ENCODE measurements at regions of chr1 and their contacts with region 1.

Region 1: GRCh38 chr1:58783993-58784757 is at the start of gene JUN:
- DNase-seq: peak; percentile 99
- H3K4me3 Mint-ChIP-seq: peak within 1 kb of the TSS; percentile 91
- H3K27ac Mint-ChIP-seq: peak within 1 kb of the TSS; percentile 98
- H3K4me1 Mint-ChIP-seq: peaks cover 21% of the 10 kb centered on the region
- H3K27me3 Mint-ChIP-seq: no peaks in the 10 kb centered on the region
- CTCF ChIP-seq: no peak
- total RNA-seq, gene JUN: 60.6 and 71.5 TPM in 2 replicates

Region 2: DNA sequence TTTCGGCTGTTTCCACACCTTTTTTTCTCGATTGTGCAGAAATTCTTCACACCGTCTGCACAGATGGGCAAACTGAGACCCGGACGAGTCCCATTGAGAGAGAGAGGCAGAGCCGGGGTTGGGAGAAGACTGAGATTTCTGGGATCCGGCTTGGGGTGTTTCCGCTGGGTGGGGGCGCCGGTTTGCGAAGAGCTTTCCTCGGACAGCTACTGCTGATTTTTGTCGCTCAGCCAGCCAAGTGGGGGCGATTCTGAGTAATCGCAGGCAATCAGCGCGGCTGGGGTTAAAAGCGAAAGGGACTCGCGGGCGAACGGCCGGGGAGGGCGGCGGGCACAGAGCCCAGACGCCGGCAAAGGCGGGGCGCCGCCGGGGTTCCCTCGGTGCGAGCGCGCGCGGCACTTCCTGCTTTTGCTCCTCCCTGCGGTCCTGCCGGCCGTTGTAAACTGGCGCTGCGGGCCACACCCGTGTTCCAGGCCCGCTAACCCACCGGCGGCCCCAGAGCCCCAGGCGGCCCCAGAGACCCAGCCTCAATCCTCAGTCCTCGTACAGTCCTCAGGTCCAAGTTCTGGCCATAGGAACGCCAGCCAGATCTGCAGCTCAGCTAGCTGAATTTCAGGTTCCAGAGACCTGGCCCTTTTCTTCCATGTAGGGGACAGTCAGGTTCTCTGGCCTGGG is 32.0 kb after region 1 on chr1:
- CTCF ChIA-PET with region 1: interaction called, 7 read pairs
- POLR2A ChIA-PET with region 1: interaction called, 29 read pairs
- intact Hi-C with region 1: loop called (anchors 1 kb)
- DNase-seq: peak; percentile 88
- H3K4me3 Mint-ChIP-seq: peak overlapping the region; percentile 78
- H3K27ac Mint-ChIP-seq: peak overlapping the region; percentile 91
- H3K4me1 Mint-ChIP-seq: peaks cover 33% of the 10 kb centered on the region
- H3K27me3 Mint-ChIP-seq: no peaks in the 10 kb centered on the region
- CTCF ChIP-seq: no peak

Region 3: DNA sequence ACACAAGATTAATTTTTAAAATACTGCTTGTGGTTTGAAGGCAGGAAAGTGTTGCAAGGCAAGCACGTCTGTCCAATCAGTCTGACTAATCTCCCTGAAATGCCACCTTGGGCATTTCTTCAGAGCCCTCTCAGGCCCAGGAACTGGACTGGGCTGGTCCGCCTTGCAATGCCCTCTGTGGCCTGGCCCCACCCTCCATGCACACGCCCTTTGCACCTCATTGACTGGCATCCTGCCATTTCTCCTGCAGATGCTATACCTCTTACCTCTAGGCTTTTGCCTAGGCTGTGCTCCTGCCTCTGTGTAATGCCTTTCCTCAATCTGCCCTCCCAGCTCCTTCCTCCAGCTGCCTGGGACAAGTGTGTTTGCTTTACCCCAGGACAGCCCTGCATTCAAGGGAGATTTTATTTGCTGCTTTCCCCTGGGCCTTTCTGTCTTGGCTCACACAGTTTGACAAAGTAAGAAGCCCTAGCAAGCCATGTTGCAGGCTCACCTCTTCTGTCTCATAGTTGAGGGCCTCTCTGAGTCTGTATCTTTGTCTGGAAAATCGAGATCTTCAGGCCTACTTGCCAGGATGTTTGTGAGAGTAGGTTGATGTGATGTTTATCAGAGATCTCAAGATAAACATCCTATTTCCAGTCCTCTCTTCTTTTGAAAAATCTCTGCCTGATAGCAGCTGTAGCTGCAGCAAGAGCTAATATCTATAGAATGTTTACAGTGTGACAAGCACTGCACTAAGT is 148.9 kb after region 1 on chr1:
- CTCF ChIA-PET with region 1: interaction called, 5 read pairs
- POLR2A ChIA-PET with region 1: interaction called, 41 read pairs
- intact Hi-C with region 1: loop called (anchors 2 kb)
- DNase-seq: peak; percentile 99
- H3K4me3 Mint-ChIP-seq: peak overlapping the region; percentile 20
- H3K27ac Mint-ChIP-seq: peak overlapping the region; percentile 86
- H3K4me1 Mint-ChIP-seq: peaks cover 62% of the 10 kb centered on the region
- H3K27me3 Mint-ChIP-seq: no peaks in the 10 kb centered on the region
- CTCF ChIP-seq: no peak

Region 4: DNA sequence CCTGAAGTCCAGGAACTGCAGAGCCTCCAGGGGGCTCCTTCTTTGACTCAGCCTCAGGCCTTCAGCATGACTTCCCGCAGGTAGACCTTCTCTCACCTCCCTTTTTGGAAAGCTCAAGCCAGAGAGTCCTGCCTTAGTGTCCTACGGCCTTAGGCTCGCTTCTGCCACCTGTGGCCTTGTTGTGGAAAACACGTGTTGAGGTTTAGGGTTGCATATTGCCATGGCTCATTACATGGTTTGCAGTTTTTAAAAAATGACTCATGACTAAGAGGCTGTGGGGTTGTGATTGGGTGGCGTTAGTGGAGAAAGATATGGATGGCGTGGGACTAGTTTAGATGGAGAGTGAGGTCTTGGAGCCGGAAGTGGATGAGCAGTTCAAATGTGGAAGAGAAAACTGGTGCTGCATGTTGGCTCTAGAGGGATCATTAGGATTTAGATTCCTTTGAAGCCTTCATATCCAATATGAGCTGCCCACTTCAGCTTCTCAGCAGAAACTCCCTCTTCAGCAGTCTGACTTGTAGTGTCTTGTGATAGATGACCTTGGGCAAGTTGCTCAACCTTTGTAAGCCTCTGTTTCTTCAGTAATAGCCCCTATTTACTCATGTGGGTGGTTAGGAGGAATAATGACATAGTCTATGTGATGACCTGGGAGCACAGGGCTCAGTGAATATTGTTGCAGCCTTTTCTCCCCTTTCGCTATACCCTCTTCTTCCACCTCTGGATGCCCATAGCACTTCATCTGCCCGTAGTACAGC is 506.2 kb after region 1 on chr1:
- CTCF ChIA-PET with region 1: interaction called, 3 read pairs
- POLR2A ChIA-PET with region 1: interaction called, 25 read pairs
- intact Hi-C with region 1: loop called (anchors 1 kb)
- DNase-seq: peak; percentile 87
- H3K4me3 Mint-ChIP-seq: no peak overlapping the region
- H3K27ac Mint-ChIP-seq: no peak overlapping the region
- H3K4me1 Mint-ChIP-seq: peaks cover 12% of the 10 kb centered on the region
- H3K27me3 Mint-ChIP-seq: no peaks in the 10 kb centered on the region
- CTCF ChIP-seq: peak; percentile 44

Region 5: DNA sequence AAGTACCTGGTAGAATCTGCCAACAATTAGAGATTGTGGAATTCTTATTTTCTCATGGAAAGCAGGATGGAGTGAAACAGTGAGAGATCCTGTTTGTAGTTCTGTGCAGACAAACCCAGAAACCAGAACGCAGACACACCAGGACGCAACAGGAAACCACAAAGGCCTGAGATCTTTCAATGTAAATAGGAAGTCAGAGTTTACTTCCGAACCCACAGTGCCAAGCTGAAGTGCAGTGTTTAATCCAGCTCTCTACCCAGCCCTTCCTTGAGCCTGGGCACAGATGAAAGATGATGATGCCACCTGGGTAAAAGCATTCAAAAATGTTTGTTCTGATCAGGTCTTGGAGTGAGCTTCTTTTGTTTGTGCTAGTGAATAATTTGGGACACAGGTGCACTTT is 786.3 kb after region 1 on chr1:
- CTCF ChIA-PET with region 1: no interaction called
- POLR2A ChIA-PET with region 1: no interaction called
- intact Hi-C with region 1: loop called (anchors 1 kb)
- DNase-seq: no peak
- H3K4me3 Mint-ChIP-seq: no peak overlapping the region
- H3K27ac Mint-ChIP-seq: no peak overlapping the region
- H3K4me1 Mint-ChIP-seq: peaks cover 5% of the 10 kb centered on the region
- H3K27me3 Mint-ChIP-seq: no peaks in the 10 kb centered on the region
- CTCF ChIP-seq: no peak

Region 6: GRCh38 chr1:59767119-59767518 is 982.9 kb after region 1 on chr1:
- CTCF ChIA-PET with region 1: no interaction called
- POLR2A ChIA-PET with region 1: interaction called, 98 read pairs
- intact Hi-C with region 1: no loop called
- DNase-seq: no peak
- H3K4me3 Mint-ChIP-seq: no peak overlapping the region
- H3K27ac Mint-ChIP-seq: no peak overlapping the region
- H3K4me1 Mint-ChIP-seq: peaks cover 19% of the 10 kb centered on the region
- H3K27me3 Mint-ChIP-seq: no peaks in the 10 kb centered on the region
- CTCF ChIP-seq: no peak

Measured in MCF 10A (cell line).